ENCODE measurements at regions of chr14 and their contacts with region 1.

Region 1: DNA sequence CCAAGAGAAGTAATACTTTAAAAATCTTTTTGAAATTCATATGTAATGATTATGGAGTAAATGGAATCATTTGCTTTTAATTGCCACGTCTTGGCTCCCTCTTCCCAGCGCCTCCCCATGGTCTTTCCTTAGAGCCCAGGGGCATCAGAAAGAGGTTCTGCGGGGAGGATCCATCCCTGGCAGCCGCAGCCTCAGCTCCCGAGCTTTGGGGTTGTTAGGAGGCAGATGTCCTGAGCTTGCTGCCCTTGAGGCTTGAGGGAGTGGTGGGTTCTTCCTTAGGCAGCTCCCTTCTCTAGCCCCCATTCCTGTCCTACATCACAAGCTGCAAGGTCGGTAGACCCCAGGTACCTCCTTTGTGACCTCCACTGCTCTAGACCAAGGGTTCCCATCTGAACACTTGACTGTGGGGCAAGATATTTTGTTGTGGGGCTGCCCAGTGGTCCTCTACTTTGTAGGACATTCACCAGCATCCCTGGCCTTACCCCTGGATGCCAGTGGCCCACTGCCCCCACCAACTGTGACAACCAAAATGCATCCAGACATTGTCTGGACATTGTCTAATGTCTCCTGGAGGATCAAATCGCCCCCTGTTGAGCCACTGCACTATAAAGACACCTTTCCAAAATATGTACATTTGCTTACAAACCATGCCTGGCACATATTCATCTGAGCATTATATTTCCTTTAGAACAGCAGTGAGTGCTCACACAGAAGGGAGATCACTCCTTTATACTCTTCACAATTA is 6.3 kb downstream of the PPP2R5C start:
- DNase-seq: no peak
- ATAC-seq: no peak
- H3K4me3 ChIP-seq: no peak overlapping the region
- H3K27ac ChIP-seq: no peak overlapping the region
- H3K4me1 ChIP-seq: no peaks in the 10 kb centered on the region; the same call in 2 of the 3 replicates
- CTCF ChIP-seq: no peak
- EP300 ChIP-seq: no peak
- POLR2A ChIP-seq: no peak
- RAD21 ChIP-seq: no peak

Region 2: GRCh38 chr14:101525640-101526527 is 241.9 kb before region 1 on chr14:
- CTCF ChIA-PET with region 1: no interaction called
- POLR2A ChIA-PET with region 1: no interaction called
- DNase-seq: no peak
- ATAC-seq: no peak
- H3K4me3 ChIP-seq: no peak overlapping the region
- H3K27ac ChIP-seq: peak overlapping the region in 1 of 2 experiments; percentile 49; a peak in 2 of 6 replicates
- H3K4me1 ChIP-seq: no peaks in the 10 kb centered on the region
- CTCF ChIP-seq: no peak
- EP300 ChIP-seq: no peak
- POLR2A ChIP-seq: no peak
- RAD21 ChIP-seq: no peak

Region 3: GRCh38 chr14:101707068-101707842 is 60.5 kb before region 1 on chr14:
- CTCF ChIA-PET with region 1: interaction called, 37 read pairs
- POLR2A ChIA-PET with region 1: no interaction called
- DNase-seq: peak; percentile 68 to 81
- ATAC-seq: peak; percentile 62 to 82
- H3K4me3 ChIP-seq: no peak overlapping the region
- H3K27ac ChIP-seq: peak overlapping the region; percentile 61 to 75
- H3K4me1 ChIP-seq: 0 out of 3 replicates have a peak, but pooled peaks cover 3% of the 10 kb centered on the region
- CTCF ChIP-seq: peak; percentile 91
- EP300 ChIP-seq: no peak
- POLR2A ChIP-seq: no peak
- RAD21 ChIP-seq: peak; percentile 94 to 96

Region 4: GRCh38 chr14:101797856-101798255 is 30.1 kb after region 1 on chr14:
- CTCF ChIA-PET with region 1: interaction called, 16 read pairs
- POLR2A ChIA-PET with region 1: no interaction called
- DNase-seq: no peak
- ATAC-seq: no peak
- H3K4me3 ChIP-seq: no peak overlapping the region
- H3K27ac ChIP-seq: no peak overlapping the region
- H3K4me1 ChIP-seq: no peaks in the 10 kb centered on the region
- CTCF ChIP-seq: no peak
- EP300 ChIP-seq: no peak
- POLR2A ChIP-seq: no peak
- RAD21 ChIP-seq: no peak

Region 5: GRCh38 chr14:101843665-101844064 is 75.9 kb after region 1 on chr14:
- CTCF ChIA-PET with region 1: interaction called, 17 read pairs
- POLR2A ChIA-PET with region 1: no interaction called
- DNase-seq: peak in 1 of 2 experiments; percentile 24
- ATAC-seq: peak in 1 of 2 experiments; percentile 48; a peak in 2 of 6 replicates
- H3K4me3 ChIP-seq: no peak overlapping the region
- H3K27ac ChIP-seq: no peak overlapping the region
- H3K4me1 ChIP-seq: no peaks in the 10 kb centered on the region
- CTCF ChIP-seq: peak; percentile 29; the same call in 2 of the 3 replicates
- EP300 ChIP-seq: no peak
- POLR2A ChIP-seq: no peak
- RAD21 ChIP-seq: peak; percentile 41 to 49; a peak in 3 of 5 replicates

Region 6: DNA sequence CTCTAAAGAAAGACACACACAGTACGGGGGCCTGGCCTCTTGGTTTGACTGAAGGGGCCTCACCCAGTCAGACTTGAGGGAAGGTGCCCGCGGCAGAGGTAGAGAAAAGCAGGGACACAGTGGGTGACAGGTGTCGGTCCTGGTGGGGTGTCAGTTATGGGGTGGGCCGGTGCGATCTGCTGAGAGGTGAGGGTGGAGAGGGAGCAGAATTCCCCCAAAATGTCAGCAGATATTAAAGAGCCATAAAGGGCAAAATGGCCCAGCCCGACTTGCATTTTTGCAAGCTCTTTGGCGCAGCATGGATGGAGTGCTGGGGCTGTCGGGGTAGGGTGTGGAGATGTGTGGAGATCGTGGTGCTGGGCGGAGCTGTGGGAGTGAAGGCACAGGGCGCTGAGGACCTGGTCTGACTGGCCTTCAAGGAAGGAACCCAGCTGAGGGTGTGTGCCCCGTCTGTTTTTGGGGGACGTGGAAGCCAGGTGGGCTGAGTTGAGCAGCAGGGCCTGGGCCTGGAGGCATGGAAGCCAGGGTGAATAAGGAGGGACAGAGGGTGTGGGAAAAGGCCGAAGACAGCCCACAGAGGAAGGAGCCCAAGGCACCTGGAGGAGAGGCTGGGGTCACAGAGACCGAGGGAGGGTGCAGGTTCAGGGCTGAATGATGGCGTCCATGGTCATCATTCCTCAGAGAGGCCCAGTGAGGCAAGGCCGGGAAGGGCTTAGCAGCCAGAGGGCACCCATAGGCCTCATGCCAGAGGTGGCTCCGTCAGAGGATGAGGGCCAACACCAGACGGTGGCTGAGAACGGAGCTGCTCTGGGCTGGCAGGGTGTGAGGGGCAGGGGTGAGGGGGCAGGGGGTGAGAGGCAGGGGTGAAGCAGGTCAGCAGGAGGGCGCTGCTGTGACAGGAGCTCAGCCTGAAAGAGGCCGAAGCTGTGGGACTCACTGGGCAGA is 148.4 kb after region 1 on chr14:
- CTCF ChIA-PET with region 1: interaction called, 15 read pairs
- POLR2A ChIA-PET with region 1: no interaction called
- DNase-seq: no peak
- ATAC-seq: peak; percentile 23 to 26; a peak in 2 of 6 replicates
- H3K4me3 ChIP-seq: no peak overlapping the region
- H3K27ac ChIP-seq: no peak overlapping the region
- H3K4me1 ChIP-seq: no peaks in the 10 kb centered on the region
- CTCF ChIP-seq: no peak
- EP300 ChIP-seq: no peak
- POLR2A ChIP-seq: no peak
- RAD21 ChIP-seq: no peak

Region 7: DNA sequence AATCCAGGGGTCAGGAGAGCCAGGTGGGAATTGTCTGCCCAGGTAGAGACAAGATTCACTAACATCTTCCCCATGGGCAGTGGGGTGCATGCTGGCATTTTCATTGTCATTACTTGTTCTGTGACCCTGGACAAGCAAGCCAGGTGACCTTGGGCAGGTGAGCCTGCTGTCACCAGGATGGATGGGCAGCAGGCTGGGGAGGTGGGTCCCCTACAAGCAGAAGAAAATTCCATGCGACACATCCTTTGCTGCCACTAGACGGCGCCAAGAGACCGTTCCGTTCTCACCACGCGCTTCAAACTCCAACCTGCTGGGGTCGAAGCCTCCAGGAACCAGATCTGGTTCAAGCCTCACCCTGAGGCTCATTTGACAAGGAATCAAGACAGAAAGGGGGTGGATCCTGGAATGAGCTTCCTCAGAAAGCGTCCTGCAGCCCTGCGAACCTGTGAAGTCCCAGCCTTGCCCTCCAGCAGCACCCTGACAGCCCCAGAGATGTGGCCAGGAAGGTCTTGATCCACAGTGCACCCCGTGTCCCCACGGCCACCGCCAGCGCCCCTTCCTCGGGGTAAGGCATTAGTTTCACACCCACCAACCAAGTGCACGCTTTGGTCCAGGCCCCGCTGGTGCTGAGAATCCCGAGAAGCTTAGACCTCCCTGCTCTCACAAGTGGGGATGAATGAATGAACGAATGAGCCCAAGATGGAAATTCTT is 193.4 kb after region 1 on chr14:
- CTCF ChIA-PET with region 1: interaction called, 59 read pairs
- POLR2A ChIA-PET with region 1: no interaction called
- DNase-seq: peak; percentile 77 to 89
- ATAC-seq: peak; percentile 11 to 60
- H3K4me3 ChIP-seq: no peak overlapping the region
- H3K27ac ChIP-seq: peak overlapping the region; percentile 82 to 99
- H3K4me1 ChIP-seq: peaks cover 28% of the 10 kb centered on the region
- CTCF ChIP-seq: peak; percentile 96
- EP300 ChIP-seq: no peak
- POLR2A ChIP-seq: no peak
- RAD21 ChIP-seq: peak; percentile 96 to 97

Measured in A549 (cell line).